Activated B cell treated with CpG ODN at 0.5 μM for 24 hours (primary cell): ENCODE measurements at regions of chr3 and their contacts with region 1.

Region 1: DNA sequence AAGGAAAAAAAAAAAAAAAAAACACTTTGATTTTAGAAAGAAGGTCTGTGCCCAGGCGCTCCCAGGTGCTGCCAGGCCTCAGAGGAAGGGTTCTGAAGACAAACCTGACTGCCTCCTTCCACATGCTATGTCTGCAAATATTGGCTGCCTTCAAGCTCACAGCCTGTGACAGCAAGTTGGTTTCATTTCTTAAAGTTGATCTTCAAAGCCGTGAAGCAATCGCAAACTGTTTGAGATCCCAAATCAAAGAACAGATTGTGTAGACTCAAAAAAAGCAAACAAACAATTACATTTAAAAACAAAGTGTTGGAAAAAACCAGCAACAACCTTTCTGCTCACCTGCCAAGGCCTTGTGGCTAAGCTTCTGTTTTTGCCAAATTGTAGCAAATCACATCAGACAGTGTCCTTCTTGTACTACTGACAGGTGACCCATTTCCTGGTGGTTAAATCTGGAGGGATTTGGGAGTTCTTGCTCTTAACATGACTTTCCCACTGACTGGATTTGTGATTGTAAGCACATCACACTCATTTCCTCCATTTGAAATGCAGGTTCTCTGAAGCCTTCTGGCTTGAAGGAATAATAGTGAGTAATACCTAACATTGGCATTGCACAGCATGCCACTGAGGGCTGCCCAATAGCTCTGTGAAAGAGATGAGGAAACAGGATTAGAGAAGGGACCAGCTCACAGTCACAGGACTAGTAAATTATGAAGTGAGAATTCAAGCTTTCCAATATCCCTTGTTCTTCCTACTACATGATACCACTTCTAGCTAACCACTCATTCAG is 502.4 kb downstream of the LPP start:
- DNase-seq: no peak
- ATAC-seq: no peak
- H3K4me3 Mint-ChIP-seq: no peak overlapping the region
- H3K27ac Mint-ChIP-seq: no peak overlapping the region
- H3K4me1 Mint-ChIP-seq: no peaks in the 10 kb centered on the region
- H3K27me3 Mint-ChIP-seq: no peaks in the 10 kb centered on the region
- CTCF ChIP-seq: no peak

Region 2: DNA sequence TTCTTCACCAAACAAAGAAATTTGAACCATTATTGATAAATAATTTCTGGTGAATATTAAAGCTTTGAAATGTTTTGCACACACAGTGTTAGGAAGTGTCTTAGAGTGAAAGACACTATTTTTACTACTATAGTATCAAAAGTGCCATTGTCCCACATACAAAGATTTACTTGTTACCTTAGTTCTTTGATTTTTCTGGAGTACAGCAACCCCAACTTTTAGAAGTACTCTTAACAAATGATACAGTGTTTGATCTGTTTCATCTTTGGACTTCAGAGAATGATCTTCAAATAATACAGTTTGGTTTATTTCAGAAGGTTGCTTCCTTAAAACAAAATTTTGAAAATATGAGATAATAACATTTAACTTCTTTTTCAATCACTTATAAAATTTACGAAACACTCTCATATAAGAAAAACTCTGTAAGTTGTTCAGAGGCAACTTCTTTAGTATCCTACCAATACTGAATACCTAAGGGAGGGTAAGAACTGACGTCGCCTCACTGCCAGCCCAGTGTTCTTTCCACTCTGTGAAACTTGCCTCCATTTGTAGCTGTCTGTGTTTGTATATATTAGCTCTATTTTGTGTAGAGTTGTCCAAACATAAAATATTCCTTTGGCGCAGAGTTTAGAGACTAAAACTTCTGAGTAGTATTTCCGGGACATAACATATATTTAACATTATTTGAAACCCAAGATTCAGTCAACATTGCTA is 38.2 kb before region 1 on chr3:
- CTCF ChIA-PET with region 1: no interaction called
- POLR2A ChIA-PET with region 1: no interaction called
- intact Hi-C with region 1: loop called (anchors 5 kb)
- DNase-seq: no peak
- ATAC-seq: no peak
- H3K4me3 Mint-ChIP-seq: no peak overlapping the region
- H3K27ac Mint-ChIP-seq: no peak overlapping the region
- H3K4me1 Mint-ChIP-seq: no peaks in the 10 kb centered on the region
- H3K27me3 Mint-ChIP-seq: no peaks in the 10 kb centered on the region
- CTCF ChIP-seq: no peak

Region 3: GRCh38 chr3:190249414-190249813 is 1593.0 kb after region 1 on chr3:
- CTCF ChIA-PET with region 1: no interaction called
- POLR2A ChIA-PET with region 1: no interaction called
- intact Hi-C with region 1: no loop called
- DNase-seq: no peak
- ATAC-seq: no peak
- H3K4me3 Mint-ChIP-seq: no peak overlapping the region
- H3K27ac Mint-ChIP-seq: no peak overlapping the region
- H3K4me1 Mint-ChIP-seq: no peaks in the 10 kb centered on the region
- H3K27me3 Mint-ChIP-seq: no peaks in the 10 kb centered on the region
- CTCF ChIP-seq: no peak